H1 (cell line): ENCODE measurements at regions of chr3 and their contacts with region 1.

Region 1: DNA sequence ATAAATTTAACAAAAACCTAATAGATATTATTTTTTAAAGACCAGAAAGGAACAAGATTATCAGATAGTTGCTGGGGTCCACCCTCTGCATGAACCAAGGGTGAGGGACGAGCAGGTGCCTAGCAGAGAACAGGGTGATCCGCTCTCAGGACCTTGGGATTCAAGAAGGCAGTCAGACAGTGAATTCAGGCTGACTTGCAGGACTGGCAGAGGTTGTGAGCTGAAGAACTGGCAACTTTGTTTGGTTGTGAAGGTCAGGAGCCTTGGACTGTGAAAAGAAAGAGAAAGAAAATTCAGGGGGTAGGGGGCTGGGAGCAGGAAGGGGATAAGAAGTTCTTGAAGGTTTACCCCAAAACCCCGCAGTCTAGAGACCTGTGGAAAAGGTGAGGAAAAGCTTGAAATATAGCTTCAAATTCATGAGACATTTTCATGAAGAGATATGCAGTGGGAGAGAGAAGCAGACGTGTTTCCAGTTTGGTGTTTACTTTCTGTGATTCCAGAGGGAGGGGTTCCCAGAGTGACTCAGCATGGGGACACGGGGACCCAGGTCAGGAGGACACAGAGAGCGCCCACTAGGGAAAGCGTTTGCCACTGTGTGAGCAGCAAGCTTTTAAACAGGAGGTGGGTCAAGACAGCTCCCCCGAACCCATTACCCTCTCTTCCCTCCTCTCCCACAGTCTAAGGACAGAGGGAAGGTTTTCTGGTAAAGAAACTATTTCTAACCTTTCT is 217.2 kb upstream of the UMPS start:
- DNase-seq: no peak
- H3K4me3 ChIP-seq: no peak overlapping the region
- H3K27ac ChIP-seq: no peak overlapping the region
- H3K4me1 ChIP-seq: peaks cover 3 to 6% (median 4%) of the 10 kb centered on the region in 4 experiments; a peak in 5 of 7 replicates
- H3K27me3 ChIP-seq: no peaks in the 10 kb centered on the region
- CTCF ChIP-seq: peak in 2 of 3 experiments; percentile 1 to 17; a peak in 2 of 4 replicates
- EP300 ChIP-seq: no peak
- POLR2A ChIP-seq: no peak
- RAD21 ChIP-seq: no peak

Region 2: DNA sequence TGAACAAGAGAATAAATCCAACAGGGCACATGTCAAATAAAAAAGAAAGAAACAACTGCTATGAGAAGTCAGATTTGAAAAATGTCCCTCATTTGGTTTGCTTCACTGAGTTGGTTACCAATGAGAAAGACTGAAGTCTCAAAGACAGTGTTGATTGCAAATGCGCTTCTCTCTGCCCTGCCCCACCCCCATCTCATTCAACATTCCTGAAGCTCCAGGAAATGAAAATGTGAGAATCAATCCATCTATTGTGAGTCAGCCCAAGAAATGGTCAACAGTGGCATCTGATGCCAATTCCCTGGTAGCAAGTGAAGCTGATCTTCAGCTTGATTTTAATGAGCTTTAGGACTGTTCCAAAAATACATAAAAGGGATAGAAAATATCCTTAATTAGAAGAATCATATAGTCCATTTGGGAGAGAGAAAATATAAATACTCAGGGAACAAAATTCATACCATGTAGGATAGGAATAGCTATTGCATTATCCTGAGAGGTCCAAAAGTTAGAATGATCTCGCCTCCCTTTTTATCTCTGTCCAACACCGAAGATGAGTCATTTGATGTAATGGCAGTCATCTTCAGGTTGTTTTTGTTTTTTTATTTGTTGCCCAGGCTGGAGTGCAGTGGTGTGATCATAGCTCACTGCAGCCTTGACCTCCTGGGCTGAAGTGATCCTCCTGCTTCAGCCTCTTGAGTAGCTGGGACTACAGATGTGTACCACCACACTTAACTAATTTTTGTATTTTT is 17.0 kb after region 1 on chr3:
- CTCF ChIA-PET with region 1: interaction called, 24 read pairs
- POLR2A ChIA-PET with region 1: interaction called, 8 read pairs
- DNase-seq: no peak
- H3K4me3 ChIP-seq: no peak overlapping the region; a peak in 1 of 8 replicates
- H3K27ac ChIP-seq: no peak overlapping the region
- H3K4me1 ChIP-seq: peaks cover 0 to 5% (median 2%) of the 10 kb centered on the region in 4 experiments; a peak in 2 of 7 replicates
- H3K27me3 ChIP-seq: no peaks in the 10 kb centered on the region
- CTCF ChIP-seq: no peak
- EP300 ChIP-seq: no peak
- POLR2A ChIP-seq: no peak
- RAD21 ChIP-seq: no peak